HepG2 (cell line): ENCODE measurements at regions of chr6 and their contacts with region 1.

Region 1: GRCh38 chr6:134097114-134097707 is 44.8 kb upstream of the SLC2A12 start:
- DNase-seq: peak; percentile 69
- ATAC-seq: peak; percentile 82
- H3K4me3 ChIP-seq: no peak overlapping the region
- H3K27ac ChIP-seq: no peak overlapping the region
- H3K4me1 ChIP-seq: no peaks in the 10 kb centered on the region
- H3K27me3 ChIP-seq: peaks cover 0 to 6% of the 10 kb centered on the region in 2 experiments; a peak in 1 of 5 replicates
- CTCF ChIP-seq: peak; percentile 79
- EP300 ChIP-seq: no peak
- POLR2A ChIP-seq: no peak
- RAD21 ChIP-seq: peak; percentile 82

Region 2: DNA sequence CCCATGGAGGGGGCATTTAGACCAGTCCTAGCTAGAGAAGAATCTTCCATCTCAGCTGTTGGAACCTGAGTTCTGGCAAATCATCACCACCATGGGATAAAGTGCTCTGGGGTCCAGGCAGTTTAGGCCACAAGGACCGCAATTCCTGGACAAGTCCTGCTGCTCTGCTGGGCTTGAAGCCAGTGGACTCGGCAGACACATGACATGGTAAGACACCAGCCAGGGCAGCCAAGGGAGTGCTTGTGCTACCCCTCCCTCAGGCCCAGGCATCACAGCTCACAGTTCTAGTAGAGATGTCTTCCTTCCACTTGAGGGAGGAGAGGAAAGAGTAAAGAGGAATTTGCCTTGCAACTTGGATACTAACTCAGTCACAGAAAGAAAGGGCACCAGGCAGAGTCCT is 610.0 kb before region 1 on chr6:
- CTCF ChIA-PET with region 1: no interaction called
- POLR2A ChIA-PET with region 1: no interaction called
- in situ Hi-C with region 1: no loop called
- intact Hi-C with region 1: no loop called
- DNase-seq: no peak
- ATAC-seq: no peak
- H3K4me3 ChIP-seq: no peak overlapping the region
- H3K27ac ChIP-seq: no peak overlapping the region
- H3K4me1 ChIP-seq: no peaks in the 10 kb centered on the region
- H3K27me3 ChIP-seq: no peaks in the 10 kb centered on the region; a peak in 1 of 5 replicates
- CTCF ChIP-seq: no peak
- EP300 ChIP-seq: no peak
- POLR2A ChIP-seq: no peak
- RAD21 ChIP-seq: no peak

Region 3: DNA sequence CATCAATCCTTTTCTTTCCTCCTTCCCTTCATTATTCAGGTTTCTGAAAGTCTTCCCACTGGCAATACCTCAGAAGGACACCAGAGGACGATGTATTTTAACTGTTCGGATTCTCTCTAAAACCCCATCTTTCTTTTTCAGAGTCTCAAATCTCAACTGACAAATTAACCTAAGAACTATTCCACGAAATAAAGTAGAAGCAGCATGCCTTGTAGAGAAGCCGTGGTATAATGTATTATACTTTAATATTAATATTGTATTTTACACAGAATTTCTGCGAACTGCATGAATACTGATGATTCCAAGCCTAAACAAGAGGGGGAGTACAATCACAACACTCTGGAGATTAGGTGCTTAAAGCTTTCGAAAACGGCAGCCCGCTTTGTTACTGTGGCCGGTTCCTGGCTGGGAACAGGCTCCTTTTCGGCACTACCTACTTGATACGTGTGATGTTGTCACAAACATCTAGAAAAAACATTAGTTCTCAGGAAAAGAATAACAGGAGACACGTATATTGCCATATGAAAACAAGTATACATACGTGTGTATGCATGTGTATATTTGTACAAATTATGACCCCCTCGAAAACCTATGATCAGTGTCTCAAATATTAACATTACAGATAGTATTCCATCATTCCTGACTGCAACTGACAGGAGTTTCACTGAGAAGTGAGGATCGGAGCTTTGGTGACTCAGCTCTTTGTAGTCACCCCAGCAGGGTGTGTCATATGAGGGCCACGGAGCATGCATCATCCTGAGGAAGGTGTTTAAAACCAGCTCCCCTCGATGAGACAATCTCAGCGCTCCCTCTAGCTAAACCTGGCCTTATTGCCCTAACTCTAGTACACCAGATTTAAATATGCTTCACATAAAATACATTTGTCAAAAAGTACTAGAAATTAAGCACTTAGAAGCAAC is 528.0 kb before region 1 on chr6:
- CTCF ChIA-PET with region 1: interaction called, 3 read pairs
- POLR2A ChIA-PET with region 1: no interaction called
- in situ Hi-C with region 1: loop called (anchors 10 kb)
- intact Hi-C with region 1: loop called (anchors 1 kb)
- DNase-seq: peak; percentile 51
- ATAC-seq: peak; percentile 93
- H3K4me3 ChIP-seq: peak overlapping the region in 2 of 3 experiments; percentile 43 to 45; a peak in 4 of 6 replicates
- H3K27ac ChIP-seq: no peak overlapping the region
- H3K4me1 ChIP-seq: peaks cover 8% of the 10 kb centered on the region
- H3K27me3 ChIP-seq: no peaks in the 10 kb centered on the region
- CTCF ChIP-seq: peak; percentile 63
- EP300 ChIP-seq: no peak
- POLR2A ChIP-seq: no peak
- RAD21 ChIP-seq: peak; percentile 38; the same call in 1 of the 2 replicates

Region 4: GRCh38 chr6:133837801-133838349 is 259.3 kb before region 1 on chr6:
- CTCF ChIA-PET with region 1: interaction called, 18 read pairs
- POLR2A ChIA-PET with region 1: no interaction called
- in situ Hi-C with region 1: loop called (anchors 5 kb)
- intact Hi-C with region 1: loop called (anchors 1 kb)
- DNase-seq: peak; percentile 56
- ATAC-seq: peak; percentile 99
- H3K4me3 ChIP-seq: peak overlapping the region; percentile 57 to 74 (median 60)
- H3K27ac ChIP-seq: no peak overlapping the region
- H3K4me1 ChIP-seq: no peaks in the 10 kb centered on the region
- H3K27me3 ChIP-seq: no peaks in the 10 kb centered on the region; a peak in 1 of 5 replicates
- CTCF ChIP-seq: peak; percentile 91
- EP300 ChIP-seq: no peak
- POLR2A ChIP-seq: no peak
- RAD21 ChIP-seq: peak; percentile 79

Region 5: GRCh38 chr6:133923938-133924593 is 173.1 kb before region 1 on chr6:
- CTCF ChIA-PET with region 1: interaction called, 105 read pairs
- POLR2A ChIA-PET with region 1: interaction called, 9 read pairs
- in situ Hi-C with region 1: loop called (anchors 5 kb)
- intact Hi-C with region 1: loop called (anchors 1 kb)
- DNase-seq: peak; percentile 81
- ATAC-seq: peak; percentile 98
- H3K4me3 ChIP-seq: no peak overlapping the region
- H3K27ac ChIP-seq: no peak overlapping the region
- H3K4me1 ChIP-seq: no peaks in the 10 kb centered on the region
- H3K27me3 ChIP-seq: no peaks in the 10 kb centered on the region
- CTCF ChIP-seq: peak; percentile 93
- EP300 ChIP-seq: no peak
- POLR2A ChIP-seq: no peak
- RAD21 ChIP-seq: peak; percentile 88

Region 6: GRCh38 chr6:133973109-133973971 is 123.9 kb before region 1 on chr6:
- CTCF ChIA-PET with region 1: interaction called, 33 read pairs
- POLR2A ChIA-PET with region 1: no interaction called
- in situ Hi-C with region 1: no loop called
- intact Hi-C with region 1: loop called (anchors 1 kb)
- DNase-seq: peak; percentile 58
- ATAC-seq: peak; percentile 46; the same call in 2 of the 3 replicates
- H3K4me3 ChIP-seq: no peak overlapping the region
- H3K27ac ChIP-seq: no peak overlapping the region
- H3K4me1 ChIP-seq: no peaks in the 10 kb centered on the region
- H3K27me3 ChIP-seq: no peaks in the 10 kb centered on the region
- CTCF ChIP-seq: peak; percentile 71
- EP300 ChIP-seq: no peak
- POLR2A ChIP-seq: no peak
- RAD21 ChIP-seq: peak; percentile 56; the same call in 1 of the 2 replicates

Region 7: GRCh38 chr6:134063966-134064445 is 33.2 kb before region 1 on chr6:
- CTCF ChIA-PET with region 1: interaction called, 3 read pairs
- POLR2A ChIA-PET with region 1: no interaction called
- in situ Hi-C with region 1: no loop called
- intact Hi-C with region 1: loop called (anchors 1 kb)
- DNase-seq: peak; percentile 75
- ATAC-seq: peak; percentile 96
- H3K4me3 ChIP-seq: peak overlapping the region in 2 of 3 experiments; percentile 25 to 26; a peak in 2 of 6 replicates
- H3K27ac ChIP-seq: no peak overlapping the region
- H3K4me1 ChIP-seq: 0 out of 2 replicates have a peak, but pooled peaks cover 15% of the 10 kb centered on the region
- H3K27me3 ChIP-seq: no peaks in the 10 kb centered on the region
- CTCF ChIP-seq: peak; percentile 89
- EP300 ChIP-seq: no peak
- POLR2A ChIP-seq: no peak
- RAD21 ChIP-seq: peak; percentile 65

Region 8: GRCh38 chr6:134138226-134138975 is 41.2 kb after region 1 on chr6:
- CTCF ChIA-PET with region 1: no interaction called
- POLR2A ChIA-PET with region 1: no interaction called
- in situ Hi-C with region 1: no loop called
- intact Hi-C with region 1: no loop called
- DNase-seq: no peak
- ATAC-seq: no peak
- H3K4me3 ChIP-seq: no peak overlapping the region
- H3K27ac ChIP-seq: no peak overlapping the region
- H3K4me1 ChIP-seq: no peaks in the 10 kb centered on the region
- H3K27me3 ChIP-seq: no peaks in the 10 kb centered on the region
- CTCF ChIP-seq: no peak
- EP300 ChIP-seq: no peak
- POLR2A ChIP-seq: no peak
- RAD21 ChIP-seq: no peak

Region 9: DNA sequence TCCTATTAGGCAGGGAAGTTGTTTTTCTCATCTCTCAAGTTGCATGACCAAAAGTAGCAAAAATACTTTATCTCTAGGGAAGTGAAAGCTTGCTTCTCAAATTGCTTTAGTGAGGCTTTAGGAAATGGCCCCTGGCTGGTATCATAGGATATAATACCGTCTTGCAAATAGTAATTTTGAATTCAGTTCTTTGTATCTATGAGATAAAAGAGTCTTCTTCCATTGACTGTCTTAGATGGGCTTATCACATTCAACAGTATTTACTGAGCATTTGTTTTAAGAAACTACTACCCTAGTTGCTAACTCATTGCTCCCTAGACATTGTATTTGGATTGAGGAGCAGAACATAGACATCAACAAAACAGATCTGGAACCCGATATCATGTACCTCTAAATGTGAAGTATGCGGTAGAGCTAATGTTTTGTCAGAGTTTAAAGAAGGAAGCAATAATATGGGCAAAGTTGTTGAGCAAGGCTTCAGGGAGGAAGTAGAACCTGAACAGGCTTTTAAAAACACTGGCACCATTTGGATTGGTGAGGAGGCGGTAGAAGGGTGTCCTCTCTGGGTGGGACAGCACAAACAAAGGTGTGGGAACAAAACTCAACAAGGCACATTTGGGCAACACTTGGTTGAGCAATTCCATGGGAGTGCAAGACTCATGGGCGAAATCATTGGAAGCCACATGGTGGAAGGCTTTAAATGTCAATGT is 119.2 kb after region 1 on chr6:
- CTCF ChIA-PET with region 1: no interaction called
- POLR2A ChIA-PET with region 1: no interaction called
- in situ Hi-C with region 1: no loop called
- intact Hi-C with region 1: no loop called
- DNase-seq: no peak
- ATAC-seq: no peak
- H3K4me3 ChIP-seq: no peak overlapping the region
- H3K27ac ChIP-seq: no peak overlapping the region
- H3K4me1 ChIP-seq: peaks cover 17% of the 10 kb centered on the region
- H3K27me3 ChIP-seq: no peaks in the 10 kb centered on the region
- CTCF ChIP-seq: no peak
- EP300 ChIP-seq: no peak
- POLR2A ChIP-seq: no peak
- RAD21 ChIP-seq: no peak